ENCODE measurements at regions of chr13 and their contacts with region 1.

Region 1: GRCh38 chr13:98998831-98999638 is 21.2 kb upstream of the DOCK9 start:
- DNase-seq: peak; percentile 57
- ATAC-seq: peak; percentile 80
- H3K4me3 Mint-ChIP-seq: peak overlapping the region; percentile 32
- H3K27ac Mint-ChIP-seq: peak overlapping the region; percentile 70
- H3K4me1 Mint-ChIP-seq: peaks cover 94% of the 10 kb centered on the region
- H3K27me3 Mint-ChIP-seq: no peaks in the 10 kb centered on the region

Region 2: DNA sequence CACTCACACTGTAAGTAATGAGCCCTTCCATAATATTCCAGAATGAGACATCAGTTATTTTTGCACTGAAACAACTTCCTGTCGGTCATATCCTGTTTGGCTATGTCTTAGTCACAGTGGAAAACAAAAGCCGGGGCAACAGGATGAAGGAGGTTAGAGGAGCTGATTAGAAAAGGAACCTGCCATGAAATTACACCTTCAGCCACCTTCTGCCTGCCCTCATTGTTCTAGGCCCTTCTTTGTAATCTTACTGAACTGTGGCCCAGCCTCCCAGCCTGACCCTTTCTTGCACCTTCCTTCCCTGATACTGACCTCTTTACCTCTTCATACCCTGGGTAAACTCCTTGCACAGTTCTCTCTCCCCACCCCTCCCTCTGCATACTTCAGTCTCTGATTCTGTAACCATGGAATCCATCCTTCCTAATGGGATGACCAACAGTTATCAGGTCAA is 88.5 kb before region 1 on chr13:
- CTCF ChIA-PET with region 1: no interaction called
- POLR2A ChIA-PET with region 1: no interaction called
- intact Hi-C with region 1: loop called (anchors 5 kb)
- DNase-seq: peak; percentile 56
- ATAC-seq: peak; percentile 89
- H3K4me3 Mint-ChIP-seq: peak overlapping the region; percentile 2
- H3K27ac Mint-ChIP-seq: peak overlapping the region; percentile 90
- H3K4me1 Mint-ChIP-seq: peaks cover 51% of the 10 kb centered on the region
- H3K27me3 Mint-ChIP-seq: no peaks in the 10 kb centered on the region

Region 3: DNA sequence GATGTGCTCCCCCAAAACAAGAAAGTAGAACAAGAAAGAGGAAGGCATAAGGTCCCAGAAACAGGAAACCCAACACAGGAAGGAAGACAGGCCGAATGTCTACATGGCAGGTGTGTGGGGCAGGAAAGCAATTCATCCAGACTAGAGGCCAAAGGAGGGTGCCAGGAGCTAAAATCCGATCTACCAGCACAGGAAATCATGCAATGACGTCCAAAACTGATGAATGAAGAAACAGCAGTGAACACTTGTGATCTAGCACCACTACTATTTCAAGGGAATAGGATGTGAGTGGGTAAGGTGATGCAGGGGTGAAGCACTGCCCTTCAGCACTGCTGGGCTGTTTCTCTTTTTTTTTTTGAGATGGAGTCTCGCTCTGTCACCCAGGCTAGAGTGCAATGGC is 80.3 kb before region 1 on chr13:
- CTCF ChIA-PET with region 1: no interaction called
- POLR2A ChIA-PET with region 1: no interaction called
- intact Hi-C with region 1: loop called (anchors 5 kb)
- DNase-seq: no peak
- ATAC-seq: peak; percentile 18
- H3K4me3 Mint-ChIP-seq: no peak overlapping the region
- H3K27ac Mint-ChIP-seq: peak overlapping the region; percentile 48
- H3K4me1 Mint-ChIP-seq: peaks cover 44% of the 10 kb centered on the region
- H3K27me3 Mint-ChIP-seq: no peaks in the 10 kb centered on the region

Region 4: GRCh38 chr13:99018418-99019180 is 19.6 kb after region 1 on chr13:
- CTCF ChIA-PET with region 1: interaction called, 4 read pairs
- POLR2A ChIA-PET with region 1: no interaction called
- intact Hi-C with region 1: loop called in 1 of 2 experiments (anchors 2 kb)
- DNase-seq: no peak
- ATAC-seq: peak; percentile 92
- H3K4me3 Mint-ChIP-seq: no peak overlapping the region
- H3K27ac Mint-ChIP-seq: peak overlapping the region; percentile 81
- H3K4me1 Mint-ChIP-seq: peaks cover 58% of the 10 kb centered on the region
- H3K27me3 Mint-ChIP-seq: no peaks in the 10 kb centered on the region

Region 5: GRCh38 chr13:99062593-99062992 is 63.6 kb after region 1 on chr13:
- CTCF ChIA-PET with region 1: no interaction called
- POLR2A ChIA-PET with region 1: no interaction called
- intact Hi-C with region 1: no loop called
- DNase-seq: no peak
- ATAC-seq: no peak
- H3K4me3 Mint-ChIP-seq: no peak overlapping the region
- H3K27ac Mint-ChIP-seq: no peak overlapping the region
- H3K4me1 Mint-ChIP-seq: peaks cover 72% of the 10 kb centered on the region
- H3K27me3 Mint-ChIP-seq: no peaks in the 10 kb centered on the region

Region 6: DNA sequence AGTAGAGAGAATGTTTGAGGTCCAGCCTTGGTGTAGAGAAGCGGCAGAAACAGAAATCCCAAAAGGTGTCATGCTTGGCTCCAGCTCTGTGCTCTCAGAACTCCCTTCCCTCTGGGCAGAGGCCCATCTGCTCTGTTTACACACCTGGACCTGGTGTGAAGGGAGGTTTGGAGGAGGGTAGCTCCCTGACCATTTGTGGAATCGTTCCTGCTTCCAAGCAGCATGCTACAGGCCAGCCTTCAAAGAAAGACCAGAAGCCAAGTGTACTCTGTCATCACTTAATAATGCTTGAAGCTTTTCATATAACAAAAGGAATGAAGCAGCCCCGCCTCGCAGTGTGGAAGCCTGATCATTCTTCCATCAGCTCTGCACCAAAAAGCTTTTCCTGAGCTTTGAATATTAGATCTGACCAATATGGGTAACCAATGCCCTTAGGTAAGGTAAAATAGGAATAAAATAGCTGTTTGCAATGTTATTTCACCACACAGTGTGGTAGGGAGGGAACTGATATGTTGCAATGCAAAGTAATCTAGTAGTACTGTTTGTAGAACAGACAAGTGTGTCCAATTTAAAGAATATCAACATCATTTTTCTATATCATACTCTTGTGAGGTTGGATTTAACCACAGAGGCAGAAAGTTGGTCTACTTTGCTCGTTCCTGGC is 909.2 kb after region 1 on chr13:
- CTCF ChIA-PET with region 1: no interaction called
- POLR2A ChIA-PET with region 1: no interaction called
- intact Hi-C with region 1: no loop called
- DNase-seq: no peak
- ATAC-seq: no peak
- H3K4me3 Mint-ChIP-seq: no peak overlapping the region
- H3K27ac Mint-ChIP-seq: no peak overlapping the region
- H3K4me1 Mint-ChIP-seq: peaks cover 13% of the 10 kb centered on the region
- H3K27me3 Mint-ChIP-seq: peaks cover 27% of the 10 kb centered on the region

Measured in activated CD4-positive, alpha-beta T cell treated with anti-CD3 and anti-CD28 coated beads for 36 hours (primary cell).